SK-N-SH (cell line): ENCODE measurements at regions of chr7 and their contacts with region 1.

Region 1: GRCh38 chr7:70693686-70694360 is 438.1 kb upstream of the GALNT17 start:
- DNase-seq: peak; percentile 96
- H3K4me3 ChIP-seq: peak overlapping the region; percentile 79 to 97
- H3K27ac ChIP-seq: peak overlapping the region in 1 of 2 experiments; percentile 87; a peak in 2 of 4 replicates
- H3K4me1 ChIP-seq: peaks cover 9 to 30% of the 10 kb centered on the region in 2 experiments; a peak in 3 of 4 replicates
- H3K27me3 ChIP-seq: no peaks in the 10 kb centered on the region
- CTCF ChIP-seq: peak; percentile 42
- EP300 ChIP-seq: no peak; a peak in 2 of 4 replicates
- RAD21 ChIP-seq: no peak

Region 2: GRCh38 chr7:69932034-69932628 is 761.7 kb before region 1 on chr7:
- CTCF ChIA-PET with region 1: interaction called, 13 read pairs
- POLR2A ChIA-PET with region 1: interaction called, 3 read pairs
- DNase-seq: peak; percentile 61
- H3K4me3 ChIP-seq: no peak overlapping the region
- H3K27ac ChIP-seq: no peak overlapping the region
- H3K4me1 ChIP-seq: peaks cover 0 to 20% of the 10 kb centered on the region in 2 experiments; a peak in 2 of 4 replicates
- H3K27me3 ChIP-seq: no peaks in the 10 kb centered on the region
- CTCF ChIP-seq: peak; percentile 97
- EP300 ChIP-seq: no peak
- RAD21 ChIP-seq: peak; percentile 100

Region 3: DNA sequence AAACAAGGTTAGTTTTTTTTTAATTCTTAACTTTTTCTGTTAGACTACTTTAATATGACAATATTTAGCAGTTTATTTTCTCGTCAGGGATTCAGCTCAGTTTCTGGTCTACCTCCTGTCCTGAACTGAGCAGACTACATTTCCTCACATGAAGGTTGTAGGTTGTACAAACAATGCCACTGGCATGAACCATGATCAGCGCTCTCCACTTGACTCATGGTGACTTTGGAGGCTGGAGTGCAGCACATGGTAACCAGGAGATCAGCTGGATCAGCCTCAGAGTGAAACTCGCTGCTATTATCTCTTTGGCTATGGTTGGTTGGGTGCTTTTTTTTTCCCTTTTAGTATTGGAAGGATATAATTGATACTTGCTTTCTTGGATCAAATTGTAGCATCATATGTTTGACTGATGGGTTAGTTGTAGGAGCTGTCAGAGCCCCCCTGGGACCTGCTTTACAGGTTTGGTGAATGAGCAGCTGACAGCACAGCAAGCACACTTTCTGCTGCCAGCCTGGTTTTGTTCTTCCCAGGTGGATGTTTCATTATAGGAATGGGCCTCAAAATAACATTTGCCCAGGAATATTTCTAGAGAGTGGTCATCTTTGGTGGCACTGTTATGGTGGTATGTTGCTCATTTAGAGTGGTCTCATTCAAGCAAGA is 539.2 kb before region 1 on chr7:
- CTCF ChIA-PET with region 1: interaction called, 29 read pairs
- POLR2A ChIA-PET with region 1: no interaction called
- DNase-seq: no peak
- H3K4me3 ChIP-seq: no peak overlapping the region
- H3K27ac ChIP-seq: no peak overlapping the region
- H3K4me1 ChIP-seq: no peaks in the 10 kb centered on the region; a peak in 1 of 4 replicates
- H3K27me3 ChIP-seq: no peaks in the 10 kb centered on the region
- CTCF ChIP-seq: no peak
- EP300 ChIP-seq: no peak
- RAD21 ChIP-seq: no peak

Region 4: DNA sequence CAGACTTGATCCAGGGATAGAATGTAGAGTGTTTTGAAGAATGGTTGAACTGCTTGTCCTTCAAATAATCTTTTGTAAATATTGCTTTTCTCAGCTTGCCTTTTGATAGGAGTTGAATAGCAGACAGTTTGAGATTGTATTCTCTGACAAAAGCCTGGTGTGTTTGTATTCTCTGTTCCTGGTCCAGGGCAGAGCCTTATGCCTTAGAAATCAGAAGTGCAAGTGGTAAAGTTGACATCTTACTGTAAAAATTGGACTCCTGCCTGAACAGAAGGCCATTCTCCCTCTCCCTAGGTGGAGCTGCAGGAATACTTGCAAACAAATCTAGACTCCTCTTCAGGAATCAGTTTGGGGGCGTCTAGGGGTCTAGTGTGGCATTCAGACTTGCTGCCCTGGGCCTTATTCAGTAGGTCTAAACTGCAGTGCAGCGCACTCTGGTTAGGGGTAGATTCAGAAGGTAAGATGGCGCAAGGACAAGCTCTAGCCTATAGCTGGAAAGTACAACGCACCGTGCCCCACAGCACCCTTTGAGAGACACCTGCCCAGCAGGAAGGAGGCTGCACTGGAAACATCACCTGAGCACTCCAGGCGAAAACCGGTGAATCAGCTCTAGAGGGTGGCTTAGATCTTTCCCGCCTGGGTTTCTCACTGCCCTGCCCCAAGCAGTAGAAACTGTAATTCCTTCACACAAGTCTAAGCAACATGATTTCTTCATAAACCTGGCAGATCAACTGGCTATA is 170.4 kb before region 1 on chr7:
- CTCF ChIA-PET with region 1: interaction called, 10 read pairs
- POLR2A ChIA-PET with region 1: no interaction called
- DNase-seq: no peak
- H3K4me3 ChIP-seq: no peak overlapping the region
- H3K27ac ChIP-seq: no peak overlapping the region
- H3K4me1 ChIP-seq: peaks cover 0 to 13% of the 10 kb centered on the region in 2 experiments; a peak in 3 of 4 replicates
- H3K27me3 ChIP-seq: no peaks in the 10 kb centered on the region
- CTCF ChIP-seq: no peak
- EP300 ChIP-seq: no peak
- RAD21 ChIP-seq: 0 out of 2 replicates have a peak, but pooled peaks have one; percentile 11

Region 5: DNA sequence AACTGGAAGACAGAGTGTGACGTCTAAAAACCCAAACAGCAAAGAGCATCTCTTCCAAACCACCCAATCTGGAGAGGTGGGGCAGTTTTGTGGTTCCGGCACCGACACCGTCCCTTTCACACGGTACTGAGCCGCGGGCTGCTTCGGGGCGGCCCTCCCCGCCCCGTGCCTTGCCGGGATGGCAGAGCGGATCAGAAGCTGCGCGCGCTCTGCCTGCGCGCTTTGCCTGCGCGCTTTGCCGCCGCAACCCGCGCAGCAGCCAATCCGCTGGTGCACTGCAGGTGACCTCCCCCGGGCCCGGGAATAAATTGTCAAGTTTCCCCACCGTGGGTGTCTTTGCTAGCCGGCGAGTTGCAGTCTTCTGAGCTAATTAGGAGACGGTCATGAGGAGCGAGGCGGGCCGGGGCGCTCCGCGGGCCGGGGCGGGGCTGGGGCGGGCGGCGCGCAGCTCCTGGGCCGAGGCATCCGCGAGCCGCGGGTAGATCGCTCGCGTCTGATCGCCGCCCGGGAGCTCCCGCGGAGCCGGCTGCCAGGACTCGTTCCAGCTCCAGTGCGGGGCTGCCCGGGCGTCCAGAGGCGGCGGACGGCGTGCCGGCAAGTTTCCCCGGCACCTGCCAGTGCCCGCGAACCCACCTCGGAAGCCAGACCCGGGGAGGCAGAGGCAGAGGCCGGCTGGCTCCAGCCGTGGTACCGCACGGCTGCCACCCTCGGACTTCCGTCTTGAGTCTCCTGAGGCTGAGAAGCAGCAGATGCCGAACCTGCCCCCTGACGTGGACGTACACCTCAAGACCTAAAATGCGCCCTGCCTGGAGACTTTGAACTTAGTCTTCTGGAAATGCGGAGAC is 97.8 kb before region 1 on chr7:
- CTCF ChIA-PET with region 1: interaction called, 97 read pairs
- POLR2A ChIA-PET with region 1: no interaction called
- DNase-seq: peak; percentile 89
- H3K4me3 ChIP-seq: peak overlapping the region; percentile 48 to 50
- H3K27ac ChIP-seq: no peak overlapping the region
- H3K4me1 ChIP-seq: peaks cover 0 to 27% of the 10 kb centered on the region in 2 experiments; a peak in 2 of 4 replicates
- H3K27me3 ChIP-seq: no peaks in the 10 kb centered on the region
- CTCF ChIP-seq: no peak
- EP300 ChIP-seq: no peak
- RAD21 ChIP-seq: no peak

Region 6: DNA sequence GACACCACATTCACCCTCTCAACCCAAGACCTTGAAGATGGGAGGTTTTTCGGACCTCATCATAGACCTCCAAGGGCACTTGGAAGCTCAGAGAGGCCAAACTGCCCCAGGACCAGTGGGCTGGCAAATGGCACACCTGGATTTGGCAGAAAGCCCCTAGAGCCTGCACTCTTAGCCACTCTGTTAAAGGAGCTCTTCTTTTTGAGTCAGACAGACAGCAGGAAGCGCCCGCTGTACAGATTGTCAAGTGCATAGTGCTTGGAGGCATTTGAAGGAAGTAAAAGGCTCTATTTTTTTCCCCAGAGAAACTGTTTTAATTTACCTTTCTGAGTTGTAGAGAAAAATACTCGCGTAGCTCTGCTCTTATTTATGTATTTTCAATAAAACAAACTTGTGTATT is 29.5 kb after region 1 on chr7:
- CTCF ChIA-PET with region 1: interaction called, 13 read pairs
- POLR2A ChIA-PET with region 1: no interaction called
- DNase-seq: no peak
- H3K4me3 ChIP-seq: no peak overlapping the region
- H3K27ac ChIP-seq: no peak overlapping the region
- H3K4me1 ChIP-seq: peaks cover 0 to 10% of the 10 kb centered on the region in 2 experiments; a peak in 2 of 4 replicates
- H3K27me3 ChIP-seq: no peaks in the 10 kb centered on the region
- CTCF ChIP-seq: no peak
- EP300 ChIP-seq: no peak
- RAD21 ChIP-seq: no peak

Region 7: GRCh38 chr7:70763961-70764691 is 70.3 kb after region 1 on chr7:
- CTCF ChIA-PET with region 1: no interaction called
- POLR2A ChIA-PET with region 1: no interaction called
- DNase-seq: no peak
- H3K4me3 ChIP-seq: no peak overlapping the region
- H3K27ac ChIP-seq: no peak overlapping the region
- H3K4me1 ChIP-seq: peaks cover 0 to 14% of the 10 kb centered on the region in 2 experiments; a peak in 1 of 4 replicates
- H3K27me3 ChIP-seq: no peaks in the 10 kb centered on the region
- CTCF ChIP-seq: no peak
- EP300 ChIP-seq: no peak
- RAD21 ChIP-seq: no peak